Dendritic cell treated with granulocyte-macrophage colony-stimulating factor and Interleukin-4, amounts not matched to agents 40 ng/mL and 50 ng/mL, for 4 days (primary cell): ENCODE measurements at regions of chr5 and their contacts with region 1.

Region 1: DNA sequence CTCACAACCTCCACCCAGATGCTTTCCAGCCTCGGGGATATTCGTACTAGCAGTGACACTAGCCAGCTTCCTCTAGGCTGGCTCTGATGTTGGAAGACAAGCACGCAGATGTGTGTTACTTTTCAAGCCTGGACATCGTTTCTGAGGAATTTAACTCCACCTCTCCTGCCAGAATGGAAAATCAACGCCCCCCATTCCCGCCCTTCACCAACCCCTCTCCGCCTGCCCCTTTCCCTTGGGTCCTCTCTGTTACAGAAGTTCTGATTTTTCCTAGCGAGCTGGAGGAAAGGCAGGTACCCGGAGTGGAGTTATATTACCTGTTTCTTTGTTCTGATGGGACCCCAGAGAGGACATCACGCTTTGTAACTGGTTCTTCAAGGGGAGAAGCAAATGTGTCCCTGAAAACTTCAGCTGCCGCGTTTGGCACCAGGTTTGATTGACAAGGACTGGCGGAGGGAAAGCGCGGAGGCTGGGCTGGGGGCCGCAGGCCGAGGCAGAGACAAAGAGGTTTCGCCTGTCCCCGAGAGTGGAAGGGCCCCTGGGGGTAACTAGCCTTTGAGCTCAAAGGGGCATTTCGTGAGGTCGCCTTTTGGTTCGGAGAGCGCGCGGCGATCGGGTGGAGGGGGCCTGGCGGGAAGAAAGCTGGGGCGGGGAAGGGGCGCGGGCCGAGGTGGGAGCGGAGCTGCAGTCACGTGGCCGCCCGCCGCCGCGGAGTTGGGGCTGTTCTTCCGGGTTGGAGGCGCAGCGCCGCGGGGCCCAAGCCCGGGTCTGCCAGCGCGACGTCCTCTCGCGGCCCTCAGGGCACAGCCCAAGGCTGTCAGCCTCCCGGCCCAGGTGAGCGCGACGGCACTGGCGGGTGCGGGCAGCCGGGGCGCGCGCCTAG is at the start of gene NNT:
- H3K4me3 Mint-ChIP-seq: peak within 1 kb of the TSS; percentile 86
- H3K27ac Mint-ChIP-seq: peak within 1 kb of the TSS; percentile 87
- H3K4me1 Mint-ChIP-seq: peaks cover 38% of the 10 kb centered on the region
- H3K27me3 Mint-ChIP-seq: no peaks in the 10 kb centered on the region

Region 2: GRCh38 chr5:43256261-43256966 is 346.3 kb before region 1 on chr5:
- intact Hi-C with region 1: no loop called
- H3K4me3 Mint-ChIP-seq: no peak overlapping the region
- H3K27ac Mint-ChIP-seq: no peak overlapping the region
- H3K4me1 Mint-ChIP-seq: no peaks in the 10 kb centered on the region
- H3K27me3 Mint-ChIP-seq: peaks cover 4% of the 10 kb centered on the region

Region 3: DNA sequence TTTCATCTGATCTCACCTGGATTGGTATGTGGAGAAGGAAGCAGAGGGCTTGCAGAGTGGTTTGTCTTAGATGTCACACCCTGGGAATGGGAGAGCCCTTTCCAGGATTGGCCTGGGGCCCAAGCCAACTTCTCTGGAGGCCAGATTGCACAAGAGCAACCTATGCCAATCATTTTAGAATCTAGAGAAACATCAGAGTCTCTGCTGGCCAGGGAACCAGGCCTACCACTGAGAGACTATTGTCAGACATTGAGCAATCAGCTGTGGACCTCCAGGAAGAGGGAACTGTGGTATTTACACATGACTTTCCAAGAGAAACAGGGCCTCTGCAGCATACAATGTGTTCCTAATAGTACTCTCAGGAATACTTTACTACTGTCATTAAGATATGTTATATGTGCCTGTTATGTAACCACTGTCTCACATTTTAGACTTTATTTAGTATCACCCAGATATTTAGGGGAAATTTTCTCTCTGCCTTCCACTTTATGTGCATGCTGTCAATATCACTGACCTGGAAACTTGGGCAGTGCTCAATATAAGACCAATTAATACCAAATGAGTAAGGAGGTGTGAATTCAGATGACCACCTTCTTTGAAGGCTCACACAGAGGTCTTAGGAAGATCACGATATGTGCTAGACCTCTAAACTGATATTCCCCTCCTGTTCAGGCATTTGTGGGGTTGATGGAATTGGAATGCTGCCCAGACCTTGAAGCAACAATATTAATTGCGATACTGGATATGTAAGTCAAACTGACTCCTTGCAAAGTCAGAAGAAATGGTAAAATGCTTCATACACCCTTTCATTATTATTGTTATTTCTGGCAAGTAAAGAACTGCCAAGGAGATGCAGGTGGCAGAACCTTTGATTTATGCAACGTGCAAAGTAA is 170.0 kb before region 1 on chr5:
- intact Hi-C with region 1: no loop called
- H3K4me3 Mint-ChIP-seq: no peak overlapping the region
- H3K27ac Mint-ChIP-seq: no peak overlapping the region
- H3K4me1 Mint-ChIP-seq: peaks cover 5% of the 10 kb centered on the region
- H3K27me3 Mint-ChIP-seq: no peaks in the 10 kb centered on the region

Region 4: DNA sequence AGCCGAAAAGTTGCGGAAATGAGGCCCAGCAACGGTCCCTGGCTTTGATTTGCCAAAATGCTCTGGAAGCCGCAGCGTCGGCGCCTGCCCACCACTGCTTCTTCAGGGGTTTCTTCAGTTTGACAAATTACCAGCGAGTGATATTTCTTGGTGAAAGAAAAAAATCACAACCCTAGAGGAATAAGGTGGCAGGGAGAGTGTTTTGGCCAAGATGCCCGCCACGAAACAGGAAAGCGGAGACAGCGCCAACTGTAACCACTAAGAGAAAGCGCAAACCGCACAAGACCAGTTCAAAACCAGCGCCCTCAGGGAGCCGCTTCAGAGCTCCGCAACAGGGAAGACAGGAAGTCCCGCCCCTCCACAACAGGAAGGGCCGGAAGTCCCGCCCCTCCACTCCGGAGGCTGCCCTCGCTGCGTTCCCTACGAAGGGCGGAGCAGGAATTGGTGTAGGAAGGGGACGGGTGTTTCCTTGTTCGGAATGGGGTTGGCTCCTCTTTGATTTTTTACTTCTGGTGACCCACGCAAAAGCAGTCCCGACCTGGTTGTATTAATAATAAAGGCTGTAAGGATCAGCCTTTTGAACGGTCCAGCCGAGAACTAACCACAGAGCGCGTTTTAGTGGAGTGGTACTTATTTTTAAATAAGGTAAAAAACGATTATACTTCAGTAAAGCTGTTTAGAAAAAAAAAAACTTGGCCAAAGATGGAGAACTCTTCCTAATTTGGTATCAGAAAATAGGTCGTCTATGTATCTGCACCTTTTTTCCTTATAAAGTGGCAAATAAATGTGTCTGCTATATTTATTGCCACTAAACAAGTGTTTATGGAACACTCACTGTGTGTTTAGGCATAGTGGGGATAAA is 87.7 kb before region 1 on chr5 and contains the start of gene C5orf34:
- intact Hi-C with region 1: loop called (anchors 2 kb)
- H3K4me3 Mint-ChIP-seq: peak within 1 kb of the TSS; percentile 79
- H3K27ac Mint-ChIP-seq: peak within 1 kb of the TSS; percentile 88
- H3K4me1 Mint-ChIP-seq: peaks cover 24% of the 10 kb centered on the region
- H3K27me3 Mint-ChIP-seq: no peaks in the 10 kb centered on the region

Region 5: DNA sequence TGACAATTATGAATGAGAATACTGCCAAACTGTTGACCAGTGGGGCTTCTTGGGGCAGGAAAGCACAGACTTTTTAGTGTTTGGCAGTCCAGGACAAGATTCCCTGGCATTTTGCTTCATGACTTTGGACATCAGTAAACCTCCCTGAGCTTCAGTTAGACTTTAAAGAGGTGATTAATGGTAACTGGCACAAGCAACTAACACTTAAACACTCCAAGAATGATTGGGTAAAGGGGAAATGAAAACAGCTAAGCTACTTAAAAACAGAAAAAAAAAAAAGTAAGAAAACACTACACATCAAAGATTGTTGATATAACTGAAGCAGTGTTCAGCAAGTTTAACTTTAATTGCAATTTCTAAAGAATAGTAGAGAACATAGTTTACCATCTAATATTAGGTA is 59.3 kb before region 1 on chr5:
- intact Hi-C with region 1: no loop called
- H3K4me3 Mint-ChIP-seq: no peak overlapping the region
- H3K27ac Mint-ChIP-seq: no peak overlapping the region
- H3K4me1 Mint-ChIP-seq: no peaks in the 10 kb centered on the region
- H3K27me3 Mint-ChIP-seq: no peaks in the 10 kb centered on the region

Region 6: GRCh38 chr5:43556857-43557542 is 45.7 kb before region 1 on chr5 and contains the start of gene PAIP1:
- intact Hi-C with region 1: loop called (anchors 1 kb)
- H3K4me3 Mint-ChIP-seq: peak within 1 kb of the TSS; percentile 83
- H3K27ac Mint-ChIP-seq: peak within 1 kb of the TSS; percentile 75
- H3K4me1 Mint-ChIP-seq: peaks cover 7% of the 10 kb centered on the region
- H3K27me3 Mint-ChIP-seq: no peaks in the 10 kb centered on the region

Region 7: DNA sequence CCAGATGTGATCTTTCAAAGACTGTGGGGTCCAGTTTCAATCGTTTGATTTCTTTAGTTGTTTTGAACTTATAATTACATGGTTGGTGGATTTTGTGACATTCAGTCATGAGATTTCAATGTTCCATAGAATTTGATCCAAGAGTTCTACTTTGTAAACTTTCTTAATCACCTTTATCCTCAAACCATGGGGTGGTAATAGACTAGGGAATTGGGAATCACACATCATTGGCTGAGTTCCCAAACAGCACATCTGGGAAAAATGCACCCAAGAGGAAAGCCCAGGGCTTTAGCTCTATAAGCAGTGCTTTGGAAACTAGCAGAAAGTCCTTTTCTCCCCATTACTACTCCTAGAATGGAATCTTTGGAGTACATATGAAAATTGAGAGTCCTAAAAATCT is 177.9 kb after region 1 on chr5:
- intact Hi-C with region 1: no loop called
- H3K4me3 Mint-ChIP-seq: no peak overlapping the region
- H3K27ac Mint-ChIP-seq: no peak overlapping the region
- H3K4me1 Mint-ChIP-seq: no peaks in the 10 kb centered on the region
- H3K27me3 Mint-ChIP-seq: no peaks in the 10 kb centered on the region